ENCODE measurements at regions of chr12 and their contacts with region 1.

Region 1: DNA sequence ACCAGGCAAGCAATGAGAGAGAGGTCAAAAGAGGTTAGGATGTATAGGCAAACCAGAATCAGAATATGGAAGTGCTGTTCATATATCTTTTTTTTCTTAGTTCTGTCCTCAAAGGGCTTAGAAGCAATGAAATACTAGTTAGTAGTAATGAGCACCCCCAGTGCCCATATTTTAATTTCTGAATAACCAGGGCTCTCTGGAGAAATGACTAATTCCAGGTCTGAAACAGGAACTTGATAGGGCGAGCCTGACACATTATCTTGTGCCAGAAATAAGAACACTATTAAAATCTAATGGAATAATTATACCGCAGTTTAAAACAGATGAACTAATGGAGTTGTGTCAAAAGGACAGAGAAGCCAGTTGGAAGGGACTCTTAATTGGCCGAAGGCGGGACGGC is 30.9 kb downstream of the BICDL1 start:
- DNase-seq: no peak
- H3K4me3 Mint-ChIP-seq: no peak overlapping the region
- H3K27ac Mint-ChIP-seq: peak overlapping the region; percentile 44
- H3K4me1 Mint-ChIP-seq: peaks cover 34% of the 10 kb centered on the region
- H3K27me3 Mint-ChIP-seq: no peaks in the 10 kb centered on the region

Region 2: DNA sequence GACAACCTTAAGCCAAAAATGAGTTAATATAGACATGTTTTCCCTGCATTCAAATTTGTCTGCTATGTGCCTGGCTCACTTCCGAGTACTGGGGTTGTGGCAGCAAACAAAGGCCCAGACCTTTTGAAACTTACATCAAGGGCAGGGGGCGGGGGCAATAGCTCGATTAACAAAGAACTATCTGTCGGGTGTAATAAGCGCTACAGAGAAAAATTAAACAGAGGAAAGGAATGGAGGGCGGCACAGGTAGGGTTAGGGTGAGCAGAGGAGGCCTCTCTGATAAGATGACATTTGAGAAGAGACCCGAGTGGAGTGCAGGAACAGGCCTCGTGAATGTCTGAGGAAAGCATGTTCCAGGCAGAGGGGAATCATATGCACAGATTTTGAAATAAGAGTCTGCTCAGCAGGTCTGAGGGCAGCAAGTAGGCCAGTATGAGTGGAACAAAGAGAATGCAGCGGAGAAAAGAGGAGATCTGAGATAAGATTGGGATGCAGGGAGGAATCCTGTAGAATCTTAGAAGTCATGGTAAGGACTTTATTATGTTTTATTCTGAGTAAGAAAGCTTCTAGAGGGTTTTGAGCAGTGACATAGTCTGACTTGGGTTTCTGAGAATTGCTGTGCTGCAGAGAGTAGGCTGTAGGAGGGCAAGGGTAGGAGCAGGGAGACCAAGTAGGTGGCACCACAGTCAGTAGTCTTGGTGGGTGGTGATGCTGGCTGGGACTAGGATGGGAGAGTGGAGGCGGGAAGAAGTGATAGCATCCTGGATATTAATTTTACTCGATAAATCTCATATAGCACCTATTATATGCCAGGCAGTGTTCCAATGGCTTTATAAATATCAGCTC is 21.7 kb after region 1 on chr12:
- intact Hi-C with region 1: loop called (anchors 2 kb)
- DNase-seq: no peak
- H3K4me3 Mint-ChIP-seq: no peak overlapping the region
- H3K27ac Mint-ChIP-seq: peak overlapping the region; percentile 63
- H3K4me1 Mint-ChIP-seq: peaks cover 19% of the 10 kb centered on the region
- H3K27me3 Mint-ChIP-seq: no peaks in the 10 kb centered on the region